ENCODE measurements at regions of chr1 and their contacts with region 1.

Region 1: GRCh38 chr1:99645699-99646531 is at the start of gene PALMD:
- DNase-seq: peak; percentile 67
- ATAC-seq: peak; percentile 76
- total RNA-seq, gene PALMD: 114 TPM

Region 2: DNA sequence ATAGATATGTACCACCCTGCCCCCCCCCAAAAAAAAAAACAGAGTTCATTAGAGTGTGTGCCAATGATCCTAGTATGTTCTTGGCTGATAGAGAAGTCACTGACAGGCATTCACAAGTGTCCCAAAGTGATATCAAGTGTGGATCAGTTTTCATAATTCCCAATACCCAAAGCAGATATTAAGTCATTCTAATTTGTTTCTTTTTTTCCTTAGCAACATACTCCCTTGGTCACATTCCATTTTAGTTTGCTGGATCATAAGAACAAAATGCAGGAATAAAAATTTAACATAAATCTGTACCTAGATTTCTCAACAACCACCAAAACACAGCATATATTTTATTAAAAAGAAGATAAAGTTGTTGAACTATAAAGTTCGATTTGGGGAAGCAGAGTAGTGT is 129.8 kb before region 1 on chr1:
- intact Hi-C with region 1: no loop called
- DNase-seq: no peak
- ATAC-seq: peak; percentile 39

Region 3: DNA sequence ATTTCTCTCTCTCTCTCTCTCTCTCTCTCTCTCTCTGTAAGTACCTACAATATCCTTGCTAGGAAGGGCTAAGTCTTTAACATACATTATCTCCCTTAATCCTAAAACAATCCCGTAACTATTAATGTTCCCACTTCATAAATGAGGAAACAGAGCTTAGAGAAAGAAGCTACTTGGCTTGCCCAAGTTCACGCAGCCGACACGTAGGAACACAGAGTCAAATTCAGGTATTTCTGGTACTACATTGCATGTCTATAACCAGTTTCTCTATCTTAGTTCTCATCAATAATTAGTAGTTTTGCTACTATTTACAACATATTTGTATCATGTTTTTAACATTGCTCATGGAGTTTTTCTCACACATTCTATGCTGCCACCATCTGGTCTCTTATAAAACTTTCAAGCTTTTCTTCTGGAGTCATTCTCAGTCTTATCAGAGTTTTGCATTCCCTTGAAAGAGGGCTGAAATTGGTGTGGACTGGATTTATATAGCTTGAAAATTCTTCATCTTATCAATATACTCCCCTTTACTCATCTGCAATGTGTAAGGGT is 118.9 kb before region 1 on chr1:
- intact Hi-C with region 1: loop called (anchors 5 kb)
- DNase-seq: no peak
- ATAC-seq: peak; percentile 48

Region 4: DNA sequence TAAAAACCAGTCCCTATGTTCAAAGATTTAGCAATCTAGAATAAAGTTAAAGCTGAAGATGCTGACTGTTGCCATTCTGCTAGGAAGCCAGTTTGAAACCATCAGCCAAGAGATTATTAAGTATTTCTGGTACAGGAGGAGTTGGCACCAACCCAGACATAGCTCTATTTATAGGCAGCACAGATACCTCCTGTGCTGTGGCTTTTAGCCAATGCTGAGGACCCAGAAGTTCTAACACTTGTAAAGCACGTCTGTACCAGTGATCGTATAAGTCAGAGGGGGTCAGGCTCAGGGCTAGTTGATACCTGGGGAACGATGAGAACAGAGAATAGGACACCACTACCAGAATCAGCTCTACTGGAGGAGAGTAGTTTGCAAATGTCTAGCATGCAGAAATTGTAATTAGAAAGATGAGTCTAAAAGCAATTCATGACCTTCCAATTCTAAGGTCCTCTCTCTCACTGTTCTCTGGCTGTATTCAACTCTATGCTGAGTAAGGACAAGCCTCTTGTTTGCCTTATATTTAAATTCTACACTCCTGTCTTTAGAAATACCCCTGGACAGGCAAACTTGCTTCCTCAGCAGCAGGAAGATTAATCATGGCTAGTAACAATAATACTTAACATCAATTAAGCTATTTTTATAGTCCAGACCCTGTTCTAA is 96.8 kb before region 1 on chr1:
- intact Hi-C with region 1: loop called (anchors 5 kb)
- DNase-seq: no peak
- ATAC-seq: peak; percentile 99

Region 5: DNA sequence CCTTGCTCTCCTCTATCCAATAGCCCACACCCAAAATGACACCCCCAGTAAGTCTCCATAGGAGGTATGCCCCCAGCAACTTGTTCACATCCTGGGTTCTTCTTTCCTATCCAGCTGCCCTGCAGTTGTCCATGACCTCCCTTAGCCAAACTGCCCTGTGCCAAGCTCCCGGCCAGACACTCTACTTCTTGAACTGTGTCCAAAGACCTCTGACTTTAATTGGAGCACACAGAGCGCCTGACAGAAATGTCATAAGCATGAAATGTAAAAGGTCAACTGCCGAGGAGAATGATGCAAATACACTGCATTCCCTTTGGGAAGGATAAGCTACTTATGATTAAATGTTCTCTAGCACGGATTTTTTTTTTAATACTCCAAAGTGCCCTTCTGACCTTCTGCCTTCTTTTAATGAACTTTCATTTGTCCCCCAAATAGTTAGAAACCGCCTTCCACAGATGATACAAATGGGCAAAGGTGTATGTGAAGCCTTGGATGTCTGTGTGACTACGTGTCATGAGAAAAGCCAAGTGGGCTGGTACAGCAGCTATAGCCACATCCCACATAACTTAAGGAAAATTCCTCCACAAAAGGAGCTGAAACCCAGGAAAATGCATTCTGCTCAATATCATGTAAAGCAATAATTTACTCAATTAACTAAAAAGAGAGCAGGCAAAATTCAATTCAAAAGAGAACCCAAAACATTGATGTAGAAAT is 26.7 kb after region 1 on chr1:
- intact Hi-C with region 1: loop called (anchors 2 kb)
- DNase-seq: peak; percentile 56
- ATAC-seq: peak; percentile 81

Region 6: DNA sequence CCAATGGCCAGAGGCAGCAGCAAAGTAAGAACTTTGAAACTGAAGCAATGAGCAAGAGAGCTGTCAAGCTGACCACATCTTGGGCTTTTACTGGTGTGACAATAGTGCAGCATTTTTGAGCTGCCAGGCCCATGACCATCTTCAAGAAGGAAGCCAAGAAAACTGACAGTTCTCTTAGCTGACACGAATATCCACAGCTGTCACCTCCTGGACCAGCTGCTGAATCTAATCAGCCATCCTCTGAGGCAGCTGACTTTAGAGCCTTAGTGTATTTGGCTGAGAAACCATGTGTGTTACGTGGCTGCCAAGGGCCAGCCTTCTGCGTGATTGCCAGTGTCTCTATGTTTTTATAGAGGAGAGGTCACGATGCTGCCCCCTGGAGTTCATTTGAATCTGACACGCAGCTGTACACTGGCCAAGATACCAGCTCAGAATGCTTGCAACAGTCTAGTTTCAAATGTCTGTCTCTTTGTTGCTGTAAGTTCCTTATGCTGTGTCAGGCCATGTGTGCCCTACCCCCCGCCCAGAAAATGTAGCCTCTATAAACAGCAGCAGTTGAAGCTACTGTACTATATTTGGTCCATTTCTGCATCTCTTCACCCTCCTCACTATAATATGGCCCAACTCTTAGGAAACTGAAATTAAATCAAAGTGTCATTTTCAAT is 39.7 kb after region 1 on chr1:
- intact Hi-C with region 1: loop called (anchors 5 kb)
- DNase-seq: peak; percentile 85
- ATAC-seq: peak; percentile 90

Measured in Right ventricle myocardium superior (tissue), 1 donor.